Mammary epithelial cell (primary cell): ENCODE measurements at regions of chr10 and their contacts with region 1.

Region 1: GRCh38 chr10:121741248-121741792 is 143.1 kb upstream of the FGFR2 start:
- DNase-seq: peak; percentile 28
- H3K4me3 ChIP-seq: no peak overlapping the region
- H3K27ac ChIP-seq: no peak overlapping the region
- H3K4me1 ChIP-seq: no peaks in the 10 kb centered on the region
- H3K27me3 ChIP-seq: no peaks in the 10 kb centered on the region
- CTCF ChIP-seq: no peak

Region 2: GRCh38 chr10:121426307-121426706 is 315.0 kb before region 1 on chr10:
- CTCF ChIA-PET with region 1: no interaction called
- dilution Hi-C with region 1: no loop called
- in situ Hi-C with region 1: no loop called
- intact Hi-C with region 1: no loop called
- DNase-seq: no peak
- H3K4me3 ChIP-seq: no peak overlapping the region
- H3K27ac ChIP-seq: no peak overlapping the region
- H3K4me1 ChIP-seq: peaks cover 11% of the 10 kb centered on the region
- H3K27me3 ChIP-seq: no peaks in the 10 kb centered on the region
- CTCF ChIP-seq: no peak

Region 3: GRCh38 chr10:121694966-121695643 is 46.2 kb before region 1 on chr10:
- CTCF ChIA-PET with region 1: no interaction called
- dilution Hi-C with region 1: loop called (anchors 5 kb)
- in situ Hi-C with region 1: no loop called
- intact Hi-C with region 1: no loop called
- DNase-seq: peak; percentile 68
- H3K4me3 ChIP-seq: no peak overlapping the region
- H3K27ac ChIP-seq: no peak overlapping the region
- H3K4me1 ChIP-seq: peaks cover 23% of the 10 kb centered on the region
- H3K27me3 ChIP-seq: no peaks in the 10 kb centered on the region
- CTCF ChIP-seq: no peak